ENCODE measurements at regions of chr9 and their contacts with region 1.

Region 1: GRCh38 chr9:91422758-91423711 is 597 bp downstream of the NFIL3 start:
- DNase-seq: peak; percentile 74
- H3K4me3 Mint-ChIP-seq: peak overlapping the region; percentile 86
- H3K27ac Mint-ChIP-seq: peak overlapping the region; percentile 93
- H3K4me1 Mint-ChIP-seq: peaks cover 63% of the 10 kb centered on the region
- H3K27me3 Mint-ChIP-seq: no peaks in the 10 kb centered on the region

Region 2: DNA sequence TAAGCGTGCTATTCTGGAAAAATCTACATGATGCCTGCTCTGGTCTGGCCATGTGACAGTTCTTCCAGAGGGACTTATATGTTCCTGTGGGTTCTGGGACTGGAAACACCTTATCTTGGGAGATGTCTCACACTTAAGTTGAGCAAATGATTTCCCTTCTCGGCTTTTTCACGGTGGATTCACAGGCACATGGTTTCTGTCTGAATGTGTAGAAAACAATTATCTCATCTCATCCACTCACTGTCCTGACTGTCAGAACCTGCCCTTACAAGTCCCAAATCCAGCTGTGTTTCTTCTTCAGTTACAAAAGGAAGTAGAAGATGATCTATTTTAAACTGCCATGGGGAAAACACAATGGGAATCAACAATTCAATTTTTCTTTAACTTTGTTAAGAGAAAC is 437.4 kb before region 1 on chr9:
- CTCF ChIA-PET with region 1: interaction called, 10 read pairs
- POLR2A ChIA-PET with region 1: no interaction called
- DNase-seq: no peak
- H3K4me3 Mint-ChIP-seq: no peak overlapping the region
- H3K27ac Mint-ChIP-seq: no peak overlapping the region
- H3K4me1 Mint-ChIP-seq: no peaks in the 10 kb centered on the region
- H3K27me3 Mint-ChIP-seq: peaks cover 3% of the 10 kb centered on the region

Region 3: DNA sequence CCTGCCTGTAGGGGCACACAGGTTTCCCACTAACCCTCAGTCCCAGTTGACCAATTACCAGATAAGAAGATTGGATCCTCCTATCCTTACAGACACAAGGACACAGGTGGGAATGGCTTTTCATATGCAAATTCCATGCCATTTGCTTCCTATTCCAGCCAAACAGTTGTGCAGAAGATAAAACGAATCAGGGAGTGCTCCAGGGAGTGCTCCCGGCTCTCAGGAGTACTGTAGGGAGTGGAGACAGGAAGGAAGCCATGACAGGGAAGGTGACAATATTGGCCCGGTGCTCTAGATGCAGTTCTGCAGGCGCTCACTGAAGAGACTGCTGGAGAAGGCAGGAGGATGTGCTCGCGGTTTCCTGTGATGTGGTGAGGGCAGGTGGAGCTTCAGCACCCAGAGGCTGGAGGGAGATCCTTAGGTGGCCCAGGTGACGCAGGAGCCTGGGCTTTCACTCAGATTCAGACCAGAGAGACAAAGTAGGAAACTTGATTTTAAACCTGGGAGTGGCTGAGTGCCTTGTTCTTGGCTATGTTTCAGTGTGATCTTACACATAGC is 321.3 kb before region 1 on chr9:
- CTCF ChIA-PET with region 1: interaction called, 3 read pairs
- POLR2A ChIA-PET with region 1: interaction called, 37 read pairs
- DNase-seq: peak; percentile 94
- H3K4me3 Mint-ChIP-seq: peak overlapping the region; percentile 62
- H3K27ac Mint-ChIP-seq: peak overlapping the region; percentile 81
- H3K4me1 Mint-ChIP-seq: peaks cover 77% of the 10 kb centered on the region
- H3K27me3 Mint-ChIP-seq: no peaks in the 10 kb centered on the region

Region 4: GRCh38 chr9:91164724-91165520 is 258.1 kb before region 1 on chr9:
- CTCF ChIA-PET with region 1: interaction called, 8 read pairs
- POLR2A ChIA-PET with region 1: interaction called, 110 read pairs
- DNase-seq: peak; percentile 91
- H3K4me3 Mint-ChIP-seq: peak overlapping the region; percentile 88
- H3K27ac Mint-ChIP-seq: peak overlapping the region; percentile 94
- H3K4me1 Mint-ChIP-seq: peaks cover 70% of the 10 kb centered on the region
- H3K27me3 Mint-ChIP-seq: no peaks in the 10 kb centered on the region

Region 5: GRCh38 chr9:91207729-91208418 is 215.2 kb before region 1 on chr9:
- CTCF ChIA-PET with region 1: no interaction called
- POLR2A ChIA-PET with region 1: interaction called, 20 read pairs
- DNase-seq: no peak
- H3K4me3 Mint-ChIP-seq: peak overlapping the region; percentile 58
- H3K27ac Mint-ChIP-seq: peak overlapping the region; percentile 86
- H3K4me1 Mint-ChIP-seq: peaks cover 57% of the 10 kb centered on the region
- H3K27me3 Mint-ChIP-seq: no peaks in the 10 kb centered on the region

Region 6: GRCh38 chr9:91346652-91347051 is 76.4 kb before region 1 on chr9:
- CTCF ChIA-PET with region 1: interaction called, 6 read pairs
- POLR2A ChIA-PET with region 1: interaction called, 102 read pairs
- DNase-seq: no peak
- H3K4me3 Mint-ChIP-seq: no peak overlapping the region
- H3K27ac Mint-ChIP-seq: no peak overlapping the region
- H3K4me1 Mint-ChIP-seq: peaks cover 68% of the 10 kb centered on the region
- H3K27me3 Mint-ChIP-seq: no peaks in the 10 kb centered on the region

Region 7: GRCh38 chr9:91433180-91433579 is 10.1 kb after region 1 on chr9:
- CTCF ChIA-PET with region 1: interaction called, 10 read pairs
- POLR2A ChIA-PET with region 1: interaction called, 5 read pairs
- DNase-seq: no peak
- H3K4me3 Mint-ChIP-seq: no peak overlapping the region
- H3K27ac Mint-ChIP-seq: no peak overlapping the region
- H3K4me1 Mint-ChIP-seq: peaks cover 30% of the 10 kb centered on the region
- H3K27me3 Mint-ChIP-seq: peaks cover 16% of the 10 kb centered on the region